ENCODE measurements at regions of chr1 and their contacts with region 1.

Region 1: GRCh38 chr1:66725885-66726665 is 26.2 kb upstream of the DYNLT5 start:
- DNase-seq: peak; percentile 56
- H3K4me3 Mint-ChIP-seq: no peak overlapping the region
- H3K27ac Mint-ChIP-seq: no peak overlapping the region
- H3K4me1 Mint-ChIP-seq: peaks cover 30% of the 10 kb centered on the region
- H3K27me3 Mint-ChIP-seq: peaks cover 16% of the 10 kb centered on the region

Region 2: GRCh38 chr1:66648901-66649595 is 77.0 kb before region 1 on chr1:
- CTCF ChIA-PET with region 1: no interaction called
- POLR2A ChIA-PET with region 1: no interaction called
- DNase-seq: no peak
- H3K4me3 Mint-ChIP-seq: no peak overlapping the region
- H3K27ac Mint-ChIP-seq: no peak overlapping the region
- H3K4me1 Mint-ChIP-seq: no peaks in the 10 kb centered on the region
- H3K27me3 Mint-ChIP-seq: peaks cover 23% of the 10 kb centered on the region

Region 3: GRCh38 chr1:66739401-66740157 is 13.5 kb after region 1 on chr1:
- CTCF ChIA-PET with region 1: interaction called, 18 read pairs
- POLR2A ChIA-PET with region 1: no interaction called
- DNase-seq: no peak
- H3K4me3 Mint-ChIP-seq: no peak overlapping the region
- H3K27ac Mint-ChIP-seq: no peak overlapping the region
- H3K4me1 Mint-ChIP-seq: peaks cover 11% of the 10 kb centered on the region
- H3K27me3 Mint-ChIP-seq: peaks cover 5% of the 10 kb centered on the region

Measured in activated CD4-positive, alpha-beta memory T cell treated with anti-CD3 and anti-CD28 coated beads, Interleukin-2, amount 10 ng/mL, durations not matched to agents 7 days and 5 days (primary cell).